Endothelial cell of umbilical vein (primary cell): ENCODE measurements at regions of chr11 and their contacts with region 1.

Region 1: DNA sequence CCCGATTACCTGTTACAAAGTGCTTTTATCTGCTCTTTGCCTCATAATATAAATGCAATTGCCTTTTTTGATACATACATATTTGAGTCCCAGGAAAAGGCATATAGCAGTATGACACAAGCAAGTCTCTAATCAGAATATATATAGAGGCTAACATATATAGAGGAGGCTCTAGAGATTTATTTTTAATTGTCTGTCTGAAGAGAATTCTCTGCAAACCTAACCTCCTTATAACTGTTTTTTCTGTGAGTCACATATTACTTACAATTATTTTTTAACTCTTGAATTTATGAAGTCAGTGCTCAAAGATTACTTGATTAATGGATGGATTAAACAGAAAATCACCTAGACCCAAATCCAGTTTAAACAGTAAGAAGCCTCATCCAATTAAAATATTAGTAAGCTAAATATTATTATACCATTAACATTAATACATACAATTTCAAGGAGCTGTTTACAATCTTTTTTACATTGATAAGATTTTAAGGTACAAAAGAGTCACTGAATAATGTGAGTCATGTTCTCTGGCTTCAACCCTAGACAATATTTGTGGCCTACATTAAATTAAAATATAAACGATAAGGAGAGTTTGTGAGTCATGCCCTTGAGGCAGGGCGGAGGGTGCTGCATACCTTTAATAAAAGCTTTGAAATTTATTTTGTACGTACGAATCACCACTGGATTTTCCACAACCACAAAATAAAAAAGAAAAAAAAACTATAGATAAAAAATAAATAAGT is 19.2 kb upstream of the MMP13 start:
- DNase-seq: peak; percentile 84
- H3K4me3 ChIP-seq: no peak overlapping the region
- H3K27ac ChIP-seq: peak overlapping the region; percentile 70
- H3K4me1 ChIP-seq: peaks cover 32% of the 10 kb centered on the region
- H3K27me3 ChIP-seq: no peaks in the 10 kb centered on the region
- CTCF ChIP-seq: no peak
- POLR2A ChIP-seq: no peak

Region 2: DNA sequence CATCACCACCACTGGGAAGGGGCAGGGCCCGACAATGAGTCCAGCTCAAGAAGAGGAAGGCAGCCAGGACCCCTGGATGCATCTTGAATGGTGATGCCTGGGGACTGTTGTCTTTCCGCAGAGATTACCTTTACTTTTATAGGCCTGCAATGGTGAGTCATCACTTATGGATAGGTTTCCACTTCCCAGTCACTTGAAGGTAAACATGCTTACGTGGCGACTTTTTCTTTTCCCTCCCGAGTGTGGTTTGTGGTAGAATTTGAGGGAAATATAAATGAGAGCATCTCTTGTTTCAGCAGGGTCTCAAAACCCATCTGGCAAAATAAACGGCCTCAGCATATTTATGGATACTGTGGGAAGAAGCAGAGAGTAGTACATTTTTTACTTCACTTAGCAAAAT is 19.1 kb before region 1 on chr11 and contains the start of gene MMP13:
- CTCF ChIA-PET with region 1: interaction called, 4 read pairs
- POLR2A ChIA-PET with region 1: interaction called, 17 read pairs
- dilution Hi-C with region 1: no loop called
- intact Hi-C with region 1: no loop called
- DNase-seq: no peak
- H3K4me3 ChIP-seq: no peak within 1 kb of the TSS
- H3K27ac ChIP-seq: no peak within 1 kb of the TSS
- H3K4me1 ChIP-seq: no peaks in the 10 kb centered on the region
- H3K27me3 ChIP-seq: no peaks in the 10 kb centered on the region
- CTCF ChIP-seq: no peak
- POLR2A ChIP-seq: no peak
- total RNA-seq, gene MMP13: not detected in 2 replicates

Region 3: DNA sequence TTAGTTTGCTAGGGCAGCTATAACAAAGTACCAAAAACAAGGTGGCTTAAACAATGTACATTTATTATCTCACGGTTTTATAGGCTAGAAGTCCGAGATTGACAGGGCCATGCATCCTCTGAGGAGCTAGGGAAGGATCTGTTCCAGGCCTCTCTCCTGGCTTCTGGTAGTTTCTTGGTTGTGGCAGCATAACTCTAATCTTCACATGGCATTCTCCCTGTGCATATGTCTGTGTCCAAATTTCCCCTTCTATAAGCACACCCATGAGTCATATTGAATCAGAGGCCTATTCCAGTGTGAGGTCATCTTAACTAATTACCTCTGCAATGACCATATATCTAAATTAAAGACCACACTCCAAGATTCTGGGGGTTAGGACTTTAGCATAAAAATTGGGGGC is 12.1 kb after region 1 on chr11:
- CTCF ChIA-PET with region 1: interaction called, 4 read pairs
- POLR2A ChIA-PET with region 1: no interaction called
- dilution Hi-C with region 1: no loop called
- intact Hi-C with region 1: loop called (anchors 1 kb)
- DNase-seq: peak; percentile 35
- H3K4me3 ChIP-seq: no peak overlapping the region
- H3K27ac ChIP-seq: no peak overlapping the region
- H3K4me1 ChIP-seq: peaks cover 15% of the 10 kb centered on the region
- H3K27me3 ChIP-seq: no peaks in the 10 kb centered on the region
- CTCF ChIP-seq: no peak
- POLR2A ChIP-seq: no peak

Region 4: GRCh38 chr11:102994105-102994504 is 19.4 kb after region 1 on chr11:
- CTCF ChIA-PET with region 1: interaction called, 3 read pairs
- POLR2A ChIA-PET with region 1: no interaction called
- dilution Hi-C with region 1: no loop called
- intact Hi-C with region 1: loop called (anchors 1 kb)
- DNase-seq: no peak
- H3K4me3 ChIP-seq: no peak overlapping the region
- H3K27ac ChIP-seq: no peak overlapping the region
- H3K4me1 ChIP-seq: peaks cover 37% of the 10 kb centered on the region
- H3K27me3 ChIP-seq: no peaks in the 10 kb centered on the region
- CTCF ChIP-seq: no peak
- POLR2A ChIP-seq: no peak